PC-9 (cell line): ENCODE measurements at regions of chr9 and their contacts with region 1.

Region 1: GRCh38 chr9:124040935-124041816 is 29.6 kb downstream of the LHX2 start:
- DNase-seq: peak in 1 of 2 experiments; percentile 46
- H3K4me3 ChIP-seq: no peak overlapping the region
- H3K27ac ChIP-seq: no peak overlapping the region
- H3K4me1 ChIP-seq: no peaks in the 10 kb centered on the region
- H3K27me3 ChIP-seq: peaks cover 63% of the 10 kb centered on the region
- CTCF ChIP-seq: peak; percentile 76

Region 2: DNA sequence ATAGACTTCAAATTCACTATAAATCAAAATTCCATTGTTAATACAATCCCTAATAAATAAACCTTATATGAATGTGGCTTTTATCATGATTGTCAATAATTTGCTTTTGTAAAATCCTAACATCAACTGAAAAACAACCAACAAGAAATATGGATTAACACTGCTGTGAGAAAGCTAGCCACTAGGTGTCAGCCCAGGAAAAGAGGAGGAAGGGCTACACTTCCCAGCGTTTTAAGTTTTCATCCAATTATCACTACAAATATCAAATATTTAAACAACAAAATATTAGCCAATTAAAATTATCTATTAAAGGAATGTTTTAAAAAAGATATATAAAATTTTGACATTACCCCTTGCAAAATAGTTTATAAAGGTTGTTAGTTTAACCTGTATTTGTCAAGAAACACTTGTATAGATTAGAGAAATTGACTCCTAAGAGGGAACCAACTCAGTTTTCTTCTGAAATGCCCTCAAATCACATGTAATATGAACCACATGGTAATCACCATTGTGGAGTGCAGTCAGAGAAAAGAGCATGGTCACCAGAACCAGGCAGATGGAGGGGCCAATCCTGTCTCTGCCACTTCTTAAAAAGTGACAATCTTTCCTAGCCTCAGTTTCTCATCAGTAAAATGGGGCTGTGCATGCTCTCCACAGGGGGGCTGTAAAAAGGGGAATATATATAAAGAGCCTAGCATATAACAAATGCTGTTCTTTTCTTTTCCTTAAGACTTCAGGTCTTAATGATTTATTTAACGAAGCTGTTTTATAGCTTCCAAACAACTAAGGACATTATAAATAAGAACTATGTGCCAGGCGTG is 497.0 kb before region 1 on chr9:
- CTCF ChIA-PET with region 1: interaction called, 10 read pairs
- POLR2A ChIA-PET with region 1: no interaction called
- intact Hi-C with region 1: loop called (anchors 2 kb)
- DNase-seq: peak in 1 of 2 experiments; percentile 15
- H3K4me3 ChIP-seq: no peak overlapping the region
- H3K27ac ChIP-seq: no peak overlapping the region
- H3K4me1 ChIP-seq: no peaks in the 10 kb centered on the region
- H3K27me3 ChIP-seq: no peaks in the 10 kb centered on the region
- CTCF ChIP-seq: peak; percentile 89

Region 3: GRCh38 chr9:123686131-123686828 is 354.9 kb before region 1 on chr9:
- CTCF ChIA-PET with region 1: interaction called, 12 read pairs
- POLR2A ChIA-PET with region 1: no interaction called
- intact Hi-C with region 1: no loop called
- DNase-seq: peak; percentile 36 to 49
- H3K4me3 ChIP-seq: no peak overlapping the region
- H3K27ac ChIP-seq: no peak overlapping the region
- H3K4me1 ChIP-seq: peaks cover 12% of the 10 kb centered on the region
- H3K27me3 ChIP-seq: no peaks in the 10 kb centered on the region
- CTCF ChIP-seq: no peak

Region 4: GRCh38 chr9:124054582-124055227 is 13.5 kb after region 1 on chr9:
- CTCF ChIA-PET with region 1: interaction called, 10 read pairs
- POLR2A ChIA-PET with region 1: no interaction called
- intact Hi-C with region 1: no loop called
- DNase-seq: peak; percentile 73 to 94
- H3K4me3 ChIP-seq: no peak overlapping the region
- H3K27ac ChIP-seq: peak overlapping the region; percentile 44
- H3K4me1 ChIP-seq: peaks cover 15% of the 10 kb centered on the region
- H3K27me3 ChIP-seq: peaks cover 44% of the 10 kb centered on the region
- CTCF ChIP-seq: no peak

Region 5: DNA sequence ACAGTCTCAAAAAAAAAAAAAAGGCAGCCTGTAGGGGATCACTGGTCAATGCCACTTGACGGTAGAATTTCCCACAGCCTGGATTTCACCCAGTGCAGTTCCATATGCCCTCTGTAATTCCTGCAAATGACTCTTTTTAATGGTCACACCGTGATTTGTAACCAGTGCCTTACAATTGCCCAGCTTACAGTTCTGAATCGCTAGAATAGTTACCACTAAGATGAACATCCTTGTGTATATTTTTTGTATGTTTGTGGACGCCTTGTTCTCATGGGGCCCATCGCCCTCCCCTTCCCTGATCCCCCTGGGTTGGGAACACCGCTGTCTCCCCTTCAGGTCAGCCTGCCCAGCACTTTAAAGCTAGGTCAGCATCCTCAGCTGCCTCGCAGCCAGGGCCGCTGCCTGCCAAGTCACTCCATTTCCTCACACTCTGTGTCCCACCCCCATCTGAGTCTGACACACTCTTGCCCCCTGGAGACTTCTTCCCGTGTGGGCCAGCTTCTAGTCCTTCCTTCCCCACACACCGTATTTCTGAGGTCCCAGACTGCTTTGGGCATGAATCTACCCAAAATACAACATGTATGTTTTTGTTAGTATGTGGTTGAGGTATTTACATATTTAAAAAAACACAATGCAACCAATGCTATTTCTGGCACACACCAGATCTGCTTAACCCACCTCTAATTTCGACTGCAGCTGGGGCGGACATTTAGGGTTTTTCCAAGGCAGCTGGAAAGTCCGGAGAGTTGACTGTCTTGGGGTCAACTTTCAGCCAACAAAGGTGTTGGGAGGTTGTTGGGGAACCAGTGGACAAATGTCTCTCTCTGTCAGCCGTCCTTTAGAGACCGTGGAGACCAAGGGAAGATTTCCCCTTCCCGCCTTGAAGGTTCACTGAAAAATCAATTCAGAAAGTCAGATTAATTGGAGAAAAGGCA is 96.1 kb after region 1 on chr9:
- CTCF ChIA-PET with region 1: no interaction called
- POLR2A ChIA-PET with region 1: no interaction called
- intact Hi-C with region 1: no loop called
- DNase-seq: no peak
- H3K4me3 ChIP-seq: no peak overlapping the region
- H3K27ac ChIP-seq: no peak overlapping the region
- H3K4me1 ChIP-seq: peaks cover 19% of the 10 kb centered on the region
- H3K27me3 ChIP-seq: no peaks in the 10 kb centered on the region
- CTCF ChIP-seq: no peak